Caco-2 (cell line): ENCODE measurements at regions of chr2 and their contacts with region 1.

Region 1: DNA sequence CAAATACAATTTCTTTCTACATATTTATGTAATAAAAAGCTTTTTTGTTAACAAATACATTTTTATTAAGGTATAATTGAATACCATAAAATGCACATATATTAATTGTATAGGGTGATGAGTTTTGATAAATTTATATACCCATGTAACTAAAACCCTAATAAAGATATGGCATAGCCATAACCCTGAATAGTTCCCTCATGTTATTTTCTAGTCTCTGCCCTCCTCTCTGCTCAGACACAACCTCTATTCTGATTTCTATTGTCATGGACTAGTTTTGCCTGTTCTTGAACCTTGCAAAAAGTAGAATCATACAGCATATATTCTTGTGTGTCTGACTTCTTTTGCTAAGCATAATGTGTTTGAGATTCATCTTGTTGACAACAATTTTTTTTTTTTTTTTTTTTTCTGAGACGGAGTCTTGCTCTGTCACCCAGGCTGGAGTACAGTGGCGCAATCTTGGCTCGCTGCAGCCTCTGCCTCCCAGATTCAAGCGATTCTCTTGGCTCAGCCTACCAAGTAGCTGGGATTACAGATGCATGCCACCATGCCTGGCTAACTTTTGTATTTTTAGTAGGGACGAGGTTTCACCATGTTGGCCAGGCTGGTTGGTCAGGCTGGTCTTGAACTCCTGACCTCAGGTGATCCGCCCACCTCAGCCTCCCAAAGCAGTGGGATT is 38.6 kb upstream of the ZNF512 start:
- DNase-seq: no peak
- H3K4me3 ChIP-seq: no peak overlapping the region
- H3K4me3 Mint-ChIP-seq: no peak overlapping the region
- H3K27ac Mint-ChIP-seq: no peak overlapping the region
- H3K4me1 ChIP-seq: no peaks in the 10 kb centered on the region
- H3K4me1 Mint-ChIP-seq: no peaks in the 10 kb centered on the region
- H3K27me3 ChIP-seq: no peaks in the 10 kb centered on the region
- H3K27me3 Mint-ChIP-seq: no peaks in the 10 kb centered on the region
- CTCF ChIP-seq: no peak

Region 2: DNA sequence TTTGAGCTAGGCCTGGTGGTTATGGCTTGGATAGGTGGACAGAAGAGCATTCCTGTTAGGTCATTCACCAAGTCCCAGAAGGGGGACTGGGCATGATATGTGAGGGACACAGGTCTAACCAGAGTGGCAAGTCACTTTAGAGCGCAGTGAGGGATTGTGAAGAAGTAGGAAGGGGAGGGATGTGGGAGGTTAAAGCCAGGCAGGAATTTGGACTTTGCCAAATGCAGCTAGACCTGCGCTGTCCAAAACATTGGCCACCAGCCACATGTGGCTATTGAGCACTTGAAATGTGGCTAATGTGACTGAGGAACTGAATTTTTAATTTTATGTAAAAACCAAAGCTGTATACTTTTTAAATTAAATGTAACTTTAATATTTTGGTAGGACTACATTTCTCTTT is 24.0 kb before region 1 on chr2:
- CTCF ChIA-PET with region 1: no interaction called
- POLR2A ChIA-PET with region 1: no interaction called
- intact Hi-C with region 1: no loop called
- DNase-seq: no peak
- H3K4me3 ChIP-seq: no peak overlapping the region
- H3K4me3 Mint-ChIP-seq: no peak overlapping the region
- H3K27ac Mint-ChIP-seq: no peak overlapping the region
- H3K4me1 ChIP-seq: no peaks in the 10 kb centered on the region
- H3K4me1 Mint-ChIP-seq: no peaks in the 10 kb centered on the region
- H3K27me3 ChIP-seq: no peaks in the 10 kb centered on the region; the same call in 1 of the 2 replicates
- H3K27me3 Mint-ChIP-seq: no peaks in the 10 kb centered on the region
- CTCF ChIP-seq: no peak

Region 3: GRCh38 chr2:28381225-28382180 is 837.2 kb after region 1 on chr2:
- CTCF ChIA-PET with region 1: no interaction called
- POLR2A ChIA-PET with region 1: no interaction called
- intact Hi-C with region 1: loop called (anchors 5 kb)
- DNase-seq: peak; percentile 39 to 77
- H3K4me3 ChIP-seq: no peak overlapping the region
- H3K4me3 Mint-ChIP-seq: no peak overlapping the region
- H3K27ac Mint-ChIP-seq: peak overlapping the region; percentile 45
- H3K4me1 ChIP-seq: peaks cover 39% of the 10 kb centered on the region
- H3K4me1 Mint-ChIP-seq: peaks cover 13% of the 10 kb centered on the region
- H3K27me3 ChIP-seq: no peaks in the 10 kb centered on the region
- H3K27me3 Mint-ChIP-seq: no peaks in the 10 kb centered on the region
- CTCF ChIP-seq: no peak